Cardiac septum (tissue), 1 donor: ENCODE measurements at regions of chr1 and their contacts with region 1.

Region 1: GRCh38 chr1:54488779-54489626 is 59.0 kb upstream of the ACOT11 start:
- DNase-seq: peak; percentile 90

Region 2: DNA sequence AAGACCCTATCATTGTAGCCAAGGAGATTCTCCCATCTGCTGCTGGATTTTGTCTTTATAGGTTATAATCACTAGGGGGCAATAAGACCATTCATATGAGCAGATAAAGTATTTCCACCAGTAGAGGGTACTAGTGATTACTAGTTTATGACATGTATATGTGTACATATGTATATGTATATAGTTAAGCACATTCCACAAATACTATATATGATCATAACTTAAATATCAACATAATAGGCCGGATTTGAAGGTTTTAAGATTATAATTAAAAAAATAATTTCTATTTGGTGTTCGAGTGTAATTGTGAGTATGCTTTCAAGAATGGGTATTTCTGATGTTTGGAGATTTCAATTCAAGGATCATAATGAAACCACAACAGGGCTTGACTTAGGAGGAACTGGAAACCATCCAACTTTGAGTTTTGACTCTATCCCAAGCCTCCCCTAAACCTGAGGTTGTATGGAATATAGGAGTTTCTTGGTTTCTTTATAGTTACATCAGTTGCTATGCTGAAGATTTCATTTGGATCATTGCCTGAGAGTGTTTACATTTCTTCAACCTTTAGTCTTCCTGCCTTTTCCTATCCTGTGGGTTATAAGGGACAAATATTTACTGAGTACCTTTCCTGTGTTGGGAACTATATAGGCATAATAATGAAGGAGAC is 418.7 kb before region 1 on chr1:
- intact Hi-C with region 1: loop called (anchors 2 kb)
- DNase-seq: no peak

Region 3: DNA sequence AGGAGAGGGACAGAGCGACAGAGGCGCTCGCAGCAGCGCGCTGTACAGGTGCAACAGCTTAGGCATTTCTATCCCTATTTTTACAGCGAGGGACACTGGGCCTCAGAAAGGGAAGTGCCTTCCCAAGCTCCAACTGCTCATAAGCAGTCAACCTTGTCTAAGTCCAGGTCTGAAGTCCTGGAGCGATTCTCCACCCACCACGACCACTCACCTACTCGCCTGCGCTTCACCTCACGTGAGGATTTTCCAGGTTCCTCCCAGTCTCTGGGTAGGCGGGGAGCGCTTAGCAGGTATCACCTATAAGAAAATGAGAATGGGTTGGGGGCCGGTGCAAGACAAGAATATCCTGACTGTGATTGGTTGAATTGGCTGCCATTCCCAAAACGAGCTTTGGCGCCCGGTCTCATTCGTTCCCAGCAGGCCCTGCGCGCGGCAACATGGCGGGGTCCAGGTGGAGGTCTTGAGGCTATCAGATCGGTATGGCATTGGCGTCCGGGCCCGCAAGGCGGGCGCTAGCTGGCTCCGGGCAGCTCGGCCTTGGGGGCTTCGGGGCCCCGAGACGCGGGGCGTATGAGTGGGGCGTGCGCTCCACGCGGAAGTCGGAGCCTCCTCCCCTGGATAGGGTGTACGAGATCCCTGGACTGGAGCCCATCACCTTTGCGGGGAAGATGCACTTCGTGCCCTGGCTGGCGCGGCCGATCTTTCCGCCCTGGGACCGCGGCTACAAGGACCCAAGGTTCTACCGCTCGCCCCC is 289.1 kb before region 1 on chr1 and contains the starts of genes CYB5RL and MRPL37:
- intact Hi-C with region 1: loop called (anchors 5 kb)
- DNase-seq: peak; percentile 95
- total RNA-seq, gene CYB5RL: 5.7 TPM
- total RNA-seq, gene MRPL37: 71.7 TPM

Region 4: DNA sequence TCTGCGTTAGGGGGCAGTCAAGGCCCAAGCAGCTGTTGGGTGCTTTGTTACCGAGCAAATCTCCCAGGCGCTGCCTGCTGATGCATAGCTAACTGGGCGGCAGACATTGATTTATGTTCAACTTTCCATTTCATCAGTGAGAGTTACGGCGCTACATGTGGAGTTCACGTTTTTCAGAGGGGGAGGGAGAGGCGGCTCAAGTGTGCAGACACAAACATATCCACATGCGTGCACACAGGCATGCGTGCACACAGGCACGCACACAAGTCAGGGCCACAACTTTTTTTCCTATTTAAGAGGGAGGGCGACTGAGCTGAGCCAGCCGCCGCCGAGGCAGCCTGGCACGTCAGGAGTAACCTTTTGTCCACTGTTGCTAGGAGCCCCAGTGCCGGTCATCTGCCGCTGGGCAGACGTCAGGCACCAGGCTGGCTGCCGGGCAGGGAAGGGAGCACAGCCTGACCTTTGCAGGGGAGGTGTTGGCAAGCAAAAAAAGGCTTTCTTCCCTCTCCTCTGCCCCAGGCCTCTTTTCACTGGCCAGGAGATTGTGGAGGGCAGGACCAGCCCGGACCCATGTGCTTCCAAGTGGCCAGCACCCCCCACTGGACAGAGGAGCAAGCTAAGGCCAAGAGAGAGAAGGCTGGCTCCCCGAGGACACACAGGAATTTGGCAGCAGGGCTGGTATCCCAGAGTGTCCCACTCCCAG is 215.8 kb before region 1 on chr1:
- intact Hi-C with region 1: loop called (anchors 2 kb)
- DNase-seq: no peak

Region 5: GRCh38 chr1:54310439-54311328 is 178.3 kb before region 1 on chr1:
- intact Hi-C with region 1: loop called (anchors 2 kb)
- DNase-seq: peak; percentile 84

Region 6: DNA sequence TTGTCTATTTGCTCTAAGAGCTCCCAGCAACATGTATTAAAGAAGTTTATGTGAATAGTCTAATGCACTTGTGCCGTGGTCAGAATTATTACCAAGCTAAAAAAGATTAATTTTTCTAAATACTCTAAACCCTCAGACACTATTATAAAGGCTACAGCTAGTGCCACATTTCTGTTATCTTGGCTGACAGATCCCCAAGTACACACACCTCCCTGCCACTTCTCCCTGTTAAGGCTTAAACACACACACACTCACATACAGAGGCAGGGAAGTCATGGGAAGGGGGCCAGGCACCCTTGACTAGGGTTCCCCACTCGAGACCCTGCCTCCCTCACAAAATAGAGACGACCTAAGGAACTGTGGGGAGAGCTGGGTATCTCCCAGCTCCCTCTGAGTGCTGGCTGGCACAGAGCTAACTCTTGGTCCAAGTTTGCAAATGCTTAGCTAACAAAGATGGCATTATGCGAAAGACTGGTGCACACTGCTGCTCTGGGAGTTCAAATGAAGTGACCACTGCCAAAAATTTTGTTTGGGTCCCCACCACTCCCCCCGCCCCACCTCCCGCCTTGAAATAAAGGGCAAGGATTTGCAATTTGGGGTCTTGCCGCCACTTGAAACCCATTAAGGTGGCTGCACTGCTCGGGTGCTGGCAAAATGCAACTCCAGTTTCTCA is 92.6 kb before region 1 on chr1:
- intact Hi-C with region 1: no loop called
- DNase-seq: no peak

Region 7: DNA sequence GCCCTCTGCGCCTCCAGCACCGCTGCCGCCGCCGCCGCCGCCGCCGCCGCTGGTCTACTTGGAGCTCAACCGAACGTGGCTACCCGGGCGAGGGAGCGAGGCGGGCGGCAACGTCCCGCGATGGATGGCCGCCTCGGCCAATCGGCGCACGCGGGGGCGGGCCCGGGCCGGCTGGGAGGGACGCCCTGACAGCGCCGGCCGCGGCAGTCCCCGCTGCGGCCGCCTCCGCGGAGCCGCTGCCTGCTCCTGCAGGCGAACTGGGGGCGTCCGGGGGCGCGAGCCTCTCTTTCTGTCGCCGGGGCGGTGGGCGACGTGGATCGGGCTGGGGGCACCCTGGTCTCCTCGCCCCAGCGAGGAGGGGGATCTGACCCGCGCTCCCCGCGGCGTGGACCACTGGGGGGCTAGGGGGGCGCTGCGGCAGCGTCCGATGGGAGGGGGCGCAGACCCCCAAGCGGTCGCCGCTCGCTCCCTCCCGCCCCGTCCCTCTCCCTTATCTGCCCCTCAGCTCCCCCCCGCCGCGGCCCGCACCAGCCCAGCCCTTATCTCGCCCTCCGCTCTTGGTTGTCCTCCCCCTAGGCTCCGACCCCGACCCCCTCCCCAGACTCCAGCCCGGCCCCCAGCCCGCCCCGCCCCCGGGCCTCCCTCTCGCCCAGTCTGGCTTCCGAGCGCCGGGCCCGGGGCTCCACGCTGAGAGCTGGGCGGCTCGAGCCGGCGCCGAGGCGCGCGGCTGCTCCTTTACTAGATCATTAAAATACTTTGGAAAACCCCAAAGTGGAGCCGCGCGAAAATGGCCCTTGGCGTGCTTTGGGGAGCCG is 82.5 kb before region 1 on chr1 and contains the start of gene SSBP3:
- intact Hi-C with region 1: loop called (anchors 1 kb)
- DNase-seq: peak; percentile 97
- total RNA-seq, gene SSBP3: 45.4 TPM